ENCODE measurements at regions of chrX and their contacts with region 1.

Region 1: DNA sequence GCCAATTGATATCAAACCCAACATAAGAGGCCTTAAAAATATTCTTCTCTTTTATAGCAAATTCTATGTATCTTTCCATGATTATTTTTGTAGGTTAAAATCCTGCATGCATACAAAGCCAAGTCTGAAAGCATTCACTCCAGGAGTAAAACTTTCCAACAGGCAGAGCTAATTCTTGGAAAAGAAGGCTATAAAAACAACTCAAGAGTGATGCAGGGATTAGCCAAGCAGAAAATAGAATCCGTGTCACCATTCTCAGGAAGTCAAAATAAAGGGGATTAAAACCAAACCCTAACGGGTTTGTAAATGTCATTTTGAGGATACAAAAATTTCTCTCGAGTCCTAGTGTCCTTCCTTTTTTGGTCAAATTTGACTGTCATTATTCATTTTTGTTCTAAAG is 412.4 kb downstream of the DMD start:
- DNase-seq: no peak
- H3K4me3 Mint-ChIP-seq: no peak overlapping the region
- H3K27ac Mint-ChIP-seq: no peak overlapping the region
- H3K4me1 Mint-ChIP-seq: no peaks in the 10 kb centered on the region
- H3K27me3 Mint-ChIP-seq: no peaks in the 10 kb centered on the region
- CTCF ChIP-seq: no peak

Region 2: GRCh38 chrX:32851556-32851955 is 52.6 kb after region 1 on chrX:
- CTCF ChIA-PET with region 1: no interaction called
- intact Hi-C with region 1: loop called (anchors 10 kb)
- DNase-seq: no peak
- H3K4me3 Mint-ChIP-seq: no peak overlapping the region
- H3K27ac Mint-ChIP-seq: no peak overlapping the region
- H3K4me1 Mint-ChIP-seq: no peaks in the 10 kb centered on the region
- H3K27me3 Mint-ChIP-seq: no peaks in the 10 kb centered on the region
- CTCF ChIP-seq: no peak